ENCODE measurements at regions of chr17 and their contacts with region 1.

Region 1: GRCh38 chr17:17435323-17435722 is 41.5 kb upstream of the MED9 start:
- DNase-seq: peak; percentile 65
- H3K4me3 ChIP-seq: no peak overlapping the region; the same call in 1 of the 2 replicates
- CTCF ChIP-seq: peak; percentile 53

Region 2: DNA sequence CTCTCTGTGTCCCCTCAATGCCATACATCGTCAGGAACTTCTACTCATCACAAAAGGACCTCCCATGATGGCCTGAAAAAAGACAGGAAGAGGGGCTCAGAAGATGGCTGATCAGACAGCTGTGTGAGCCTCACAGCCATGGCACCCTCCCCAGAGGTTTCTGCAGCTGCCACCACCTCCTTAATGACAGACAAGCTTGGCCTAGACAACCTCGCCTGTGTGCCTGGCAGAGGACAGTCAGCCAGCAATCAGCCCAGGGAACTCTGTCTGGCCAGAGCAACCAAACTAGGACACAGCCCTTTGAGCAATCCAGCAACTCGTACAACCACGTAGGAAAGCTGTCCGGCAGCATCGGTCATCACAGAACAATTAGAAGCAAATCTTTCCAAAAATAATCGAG is 12.7 kb before region 1 on chr17:
- CTCF ChIA-PET with region 1: interaction called, 11 read pairs
- POLR2A ChIA-PET with region 1: interaction called, 3 read pairs
- DNase-seq: no peak
- H3K4me3 ChIP-seq: no peak overlapping the region
- CTCF ChIP-seq: no peak

Region 3: DNA sequence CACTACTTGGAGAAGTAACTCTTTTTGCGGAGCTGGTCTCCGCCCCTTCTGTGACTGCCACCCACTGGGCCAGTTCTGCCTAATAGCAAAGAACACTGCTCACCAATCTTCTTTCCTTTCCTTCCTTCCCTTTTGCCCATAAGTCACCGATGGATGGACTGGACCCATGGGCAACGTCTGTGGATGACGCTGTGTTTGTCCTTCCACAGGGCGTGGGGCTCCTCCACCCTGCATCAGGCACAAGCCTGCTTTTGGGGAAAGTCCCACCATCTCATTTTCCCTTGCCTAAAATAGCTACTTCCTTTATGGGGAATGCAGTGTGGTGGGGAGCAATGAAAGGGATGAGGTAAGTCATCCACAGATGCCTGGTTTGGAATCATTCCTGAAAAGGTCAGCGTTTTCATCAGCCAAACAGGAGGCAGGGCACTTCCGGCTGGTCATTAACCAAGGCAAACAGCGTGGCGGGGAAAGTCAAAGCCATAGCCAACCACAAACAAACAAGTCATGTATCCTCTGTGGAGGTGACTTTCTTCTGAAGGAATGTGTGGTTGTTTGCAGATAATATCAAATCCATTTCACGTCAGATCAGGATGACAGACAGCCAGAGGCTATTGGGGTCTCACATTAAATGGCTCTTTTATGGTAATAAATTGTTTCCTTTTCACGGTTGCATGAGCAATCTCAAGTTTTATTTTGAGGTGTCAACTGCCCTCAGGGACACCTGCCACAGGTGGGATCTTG is 10.8 kb after region 1 on chr17:
- CTCF ChIA-PET with region 1: interaction called, 13 read pairs
- POLR2A ChIA-PET with region 1: interaction called, 3 read pairs
- DNase-seq: peak; percentile 74
- H3K4me3 ChIP-seq: no peak overlapping the region
- CTCF ChIP-seq: no peak